Psoas muscle (tissue), 8 donors: ENCODE measurements at regions of chr18 and their contacts with region 1.

Region 1: GRCh38 chr18:46452820-46453219 is 204.2 kb downstream of the LOXHD1 start:
- DNase-seq: no peak
- ATAC-seq: no peak
- H3K4me3 ChIP-seq: no peak overlapping the region
- H3K27ac ChIP-seq: no peak overlapping the region
- H3K4me1 ChIP-seq: no peaks in the 10 kb centered on the region
- H3K27me3 ChIP-seq: no peaks in the 10 kb centered on the region
- CTCF ChIP-seq: no peak

Region 2: GRCh38 chr18:46343931-46344372 is 108.9 kb before region 1 on chr18:
- intact Hi-C with region 1: loop called in 1 of 2 experiments (anchors 10 kb)
- DNase-seq: peak; percentile 33 to 59
- ATAC-seq: peak; percentile 25 to 57 (median 46)
- H3K4me3 ChIP-seq: no peak overlapping the region
- H3K27ac ChIP-seq: no peak overlapping the region
- H3K4me1 ChIP-seq: no peaks in the 10 kb centered on the region
- H3K27me3 ChIP-seq: no peaks in the 10 kb centered on the region
- CTCF ChIP-seq: no peak